ENCODE measurements at regions of chrX and their contacts with region 1.

Region 1: DNA sequence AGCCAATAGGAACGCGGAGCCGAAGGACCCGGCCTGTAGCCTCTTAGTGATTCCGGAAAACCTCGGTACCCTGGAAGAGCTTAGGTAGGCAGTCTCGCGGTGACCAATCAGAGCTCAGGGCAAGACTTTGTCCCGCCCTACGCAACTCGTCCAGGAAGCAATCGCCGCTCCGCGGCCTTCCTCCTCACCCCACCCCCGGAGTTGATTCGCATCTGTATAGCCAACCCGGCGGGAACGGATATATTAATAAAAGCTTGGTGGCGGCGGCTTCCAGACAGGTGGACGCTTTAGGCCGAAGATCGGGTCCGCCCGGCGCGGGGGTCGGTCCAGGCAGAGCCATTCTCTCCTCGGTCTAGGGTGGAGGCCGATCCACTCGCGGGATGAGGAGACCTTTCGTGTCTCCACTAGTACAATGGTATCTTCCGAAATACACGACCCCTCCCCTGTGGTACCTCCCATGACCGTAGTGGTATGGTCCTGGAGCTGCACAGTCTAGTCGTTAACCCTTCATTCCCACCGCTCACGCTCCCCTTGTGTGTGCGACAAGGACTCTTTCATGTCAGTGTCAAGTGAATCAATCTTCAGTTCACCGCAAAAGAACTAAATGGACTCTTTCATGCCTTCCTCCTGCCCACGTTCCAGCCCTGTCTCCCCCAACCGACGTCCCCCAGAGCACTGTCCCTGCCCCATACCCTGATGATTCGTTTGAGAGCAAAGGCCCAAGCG is 24.2 kb upstream of the GLOD5 start:
- DNase-seq: peak; percentile 93
- H3K4me3 Mint-ChIP-seq: peak overlapping the region; percentile 95
- H3K27ac Mint-ChIP-seq: peak overlapping the region; percentile 97
- H3K4me1 Mint-ChIP-seq: peaks cover 19% of the 10 kb centered on the region
- H3K27me3 Mint-ChIP-seq: no peaks in the 10 kb centered on the region

Region 2: GRCh38 chrX:48597353-48598264 is 139.8 kb before region 1 on chrX and contains the start of gene WDR13:
- CTCF ChIA-PET with region 1: no interaction called
- POLR2A ChIA-PET with region 1: no interaction called
- intact Hi-C with region 1: loop called (anchors 5 kb)
- DNase-seq: peak; percentile 93
- H3K4me3 Mint-ChIP-seq: peak within 1 kb of the TSS; percentile 96
- H3K27ac Mint-ChIP-seq: peak within 1 kb of the TSS; percentile 99
- H3K4me1 Mint-ChIP-seq: peaks cover 8% of the 10 kb centered on the region
- H3K27me3 Mint-ChIP-seq: no peaks in the 10 kb centered on the region
- total RNA-seq, gene WDR13: 45.8 to 54.8 TPM

Region 3: GRCh38 chrX:48676106-48676892 is 61.1 kb before region 1 on chrX:
- CTCF ChIA-PET with region 1: no interaction called
- POLR2A ChIA-PET with region 1: interaction called, 6 read pairs
- intact Hi-C with region 1: loop called (anchors 1 kb)
- DNase-seq: peak; percentile 93
- H3K4me3 Mint-ChIP-seq: peak overlapping the region; percentile 90
- H3K27ac Mint-ChIP-seq: peak overlapping the region; percentile 93
- H3K4me1 Mint-ChIP-seq: peaks cover 31% of the 10 kb centered on the region
- H3K27me3 Mint-ChIP-seq: no peaks in the 10 kb centered on the region

Region 4: DNA sequence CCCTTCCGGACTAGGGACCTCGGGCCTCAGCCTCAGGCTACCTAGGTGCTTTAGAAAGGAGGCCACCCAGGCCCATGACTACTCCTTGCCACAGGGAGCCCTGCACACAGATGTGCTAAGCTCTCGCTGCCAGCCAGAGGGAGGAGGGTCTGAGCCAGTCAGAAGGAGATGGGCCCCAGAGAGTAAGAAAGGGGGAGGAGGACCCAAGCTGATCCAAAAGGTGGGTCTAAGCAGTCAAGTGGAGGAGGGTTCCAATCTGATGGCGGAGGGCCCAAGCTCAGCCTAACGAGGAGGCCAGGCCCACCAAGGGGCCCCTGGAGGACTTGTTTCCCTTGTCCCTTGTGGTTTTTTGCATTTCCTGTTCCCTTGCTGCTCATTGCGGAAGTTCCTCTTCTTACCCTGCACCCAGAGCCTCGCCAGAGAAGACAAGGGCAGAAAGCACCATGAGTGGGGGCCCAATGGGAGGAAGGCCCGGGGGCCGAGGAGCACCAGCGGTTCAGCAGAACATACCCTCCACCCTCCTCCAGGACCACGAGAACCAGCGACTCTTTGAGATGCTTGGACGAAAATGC is 53.9 kb before region 1 on chrX and contains the start of gene WAS:
- CTCF ChIA-PET with region 1: no interaction called
- POLR2A ChIA-PET with region 1: interaction called, 13 read pairs
- intact Hi-C with region 1: no loop called
- DNase-seq: peak; percentile 67
- H3K4me3 Mint-ChIP-seq: peak within 1 kb of the TSS; percentile 92
- H3K27ac Mint-ChIP-seq: peak within 1 kb of the TSS; percentile 97
- H3K4me1 Mint-ChIP-seq: peaks cover 55% of the 10 kb centered on the region
- H3K27me3 Mint-ChIP-seq: no peaks in the 10 kb centered on the region
- total RNA-seq, gene WAS: 95.2 to 99.6 TPM

Region 5: GRCh38 chrX:48696301-48697181 is 40.8 kb before region 1 on chrX and contains the start of gene SUV39H1:
- CTCF ChIA-PET with region 1: no interaction called
- POLR2A ChIA-PET with region 1: interaction called, 4 read pairs
- intact Hi-C with region 1: loop called (anchors 1 kb)
- DNase-seq: peak; percentile 91
- H3K4me3 Mint-ChIP-seq: peak within 1 kb of the TSS; percentile 87
- H3K27ac Mint-ChIP-seq: peak within 1 kb of the TSS; percentile 92
- H3K4me1 Mint-ChIP-seq: peaks cover 26% of the 10 kb centered on the region
- H3K27me3 Mint-ChIP-seq: no peaks in the 10 kb centered on the region
- total RNA-seq, gene SUV39H1: 32.3 to 35.6 TPM

Region 6: GRCh38 chrX:48715072-48715471 is 22.3 kb before region 1 on chrX:
- CTCF ChIA-PET with region 1: interaction called, 4 read pairs
- POLR2A ChIA-PET with region 1: interaction called, 11 read pairs
- intact Hi-C with region 1: loop called (anchors 1 kb)
- DNase-seq: no peak
- H3K4me3 Mint-ChIP-seq: no peak overlapping the region
- H3K27ac Mint-ChIP-seq: peak overlapping the region; percentile 84
- H3K4me1 Mint-ChIP-seq: peaks cover 79% of the 10 kb centered on the region
- H3K27me3 Mint-ChIP-seq: no peaks in the 10 kb centered on the region

Region 7: DNA sequence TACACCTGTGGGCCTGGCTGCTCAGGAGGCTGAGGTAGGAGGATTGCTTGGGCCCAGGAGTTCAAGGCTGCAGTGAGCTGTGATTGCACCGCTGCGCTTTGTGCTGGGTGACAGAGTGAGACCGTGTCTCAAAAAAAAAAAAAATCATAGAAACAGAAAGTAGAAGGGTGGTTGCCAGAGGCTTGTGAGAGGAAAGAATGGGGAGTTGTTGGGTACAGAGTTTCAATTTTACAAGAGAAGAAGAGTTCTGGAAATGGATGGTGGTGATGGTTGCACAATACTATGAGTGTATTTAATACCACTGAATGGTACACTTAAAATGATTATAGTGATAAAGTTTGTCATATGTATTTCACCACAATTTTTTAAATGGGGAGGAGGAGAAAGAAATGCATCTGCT is 14.0 kb after region 1 on chrX:
- CTCF ChIA-PET with region 1: no interaction called
- POLR2A ChIA-PET with region 1: interaction called, 3 read pairs
- intact Hi-C with region 1: loop called (anchors 1 kb)
- DNase-seq: peak; percentile 38
- H3K4me3 Mint-ChIP-seq: no peak overlapping the region
- H3K27ac Mint-ChIP-seq: no peak overlapping the region
- H3K4me1 Mint-ChIP-seq: peaks cover 11% of the 10 kb centered on the region
- H3K27me3 Mint-ChIP-seq: no peaks in the 10 kb centered on the region

Region 8: DNA sequence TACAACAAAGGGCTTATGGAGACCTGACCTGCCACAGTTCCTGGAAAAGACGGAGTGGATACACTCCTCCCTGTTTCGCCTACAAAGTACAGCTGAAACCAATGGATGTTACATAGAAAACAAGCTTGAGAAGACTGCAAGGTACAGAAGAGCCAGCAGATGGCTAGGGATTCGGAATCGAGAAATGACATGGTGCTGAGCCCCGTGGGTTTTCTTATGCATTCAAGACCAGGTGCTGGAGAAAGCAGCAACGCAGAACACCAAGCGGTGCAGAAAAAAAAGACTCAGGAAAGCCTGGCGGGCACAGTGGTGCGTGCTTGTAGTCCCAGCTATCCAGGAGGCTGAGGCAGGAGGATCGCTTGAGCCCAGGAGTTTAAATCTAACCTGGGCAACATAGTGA is 146.4 kb after region 1 on chrX:
- CTCF ChIA-PET with region 1: no interaction called
- POLR2A ChIA-PET with region 1: no interaction called
- intact Hi-C with region 1: no loop called
- DNase-seq: no peak
- H3K4me3 Mint-ChIP-seq: no peak overlapping the region
- H3K27ac Mint-ChIP-seq: no peak overlapping the region
- H3K4me1 Mint-ChIP-seq: no peaks in the 10 kb centered on the region
- H3K27me3 Mint-ChIP-seq: no peaks in the 10 kb centered on the region

Region 9: DNA sequence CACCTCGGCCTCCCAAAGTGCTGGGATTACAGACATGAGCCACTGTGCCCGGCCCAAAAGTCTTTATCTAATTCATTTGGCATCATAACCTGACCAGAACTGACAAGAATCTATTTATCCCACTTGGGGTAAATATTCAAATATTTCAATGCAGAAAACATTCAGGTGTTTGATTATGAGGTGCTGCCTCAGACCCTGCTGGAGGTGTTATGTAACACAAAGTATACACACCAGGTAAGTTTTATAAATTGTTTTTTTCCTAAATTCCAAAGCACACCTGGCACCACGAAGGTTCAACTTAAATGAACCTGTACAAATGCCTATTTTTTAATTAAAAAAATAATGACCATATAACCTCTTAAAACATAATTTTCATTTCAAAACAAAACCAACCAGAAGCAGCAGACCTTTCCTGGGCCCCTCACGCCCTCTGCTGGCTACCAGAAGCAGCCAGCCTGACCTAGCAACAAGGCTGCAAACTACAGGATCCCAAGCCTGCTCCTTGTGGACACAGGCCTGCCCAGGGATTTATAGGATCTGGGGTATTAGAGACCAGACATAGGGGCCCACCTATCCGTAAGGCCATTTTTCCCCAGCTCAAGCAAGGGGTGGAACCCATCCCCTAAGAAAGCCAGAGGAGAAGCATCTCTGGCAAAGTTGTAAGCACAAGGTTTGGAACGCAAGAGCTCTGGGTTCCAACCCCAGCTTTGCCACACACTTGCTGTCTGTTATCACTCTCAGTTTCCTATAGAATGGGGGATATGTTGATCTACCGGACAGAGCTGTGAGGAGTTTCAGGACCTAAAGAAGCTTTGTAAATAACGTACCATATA is 208.4 kb after region 1 on chrX:
- CTCF ChIA-PET with region 1: no interaction called
- POLR2A ChIA-PET with region 1: no interaction called
- intact Hi-C with region 1: no loop called
- DNase-seq: peak; percentile 65
- H3K4me3 Mint-ChIP-seq: no peak overlapping the region
- H3K27ac Mint-ChIP-seq: peak overlapping the region; percentile 67
- H3K4me1 Mint-ChIP-seq: peaks cover 49% of the 10 kb centered on the region
- H3K27me3 Mint-ChIP-seq: no peaks in the 10 kb centered on the region